Sciatic nerve (tissue), 2 donors: ENCODE measurements at regions of chr6 and their contacts with region 1.

Region 1: GRCh38 chr6:36701401-36701991 is 3.9 kb downstream of the RAB44 start:
- DNase-seq: no peak
- ATAC-seq: no peak

Region 2: GRCh38 chr6:36386495-36387439 is 314.7 kb before region 1 on chr6:
- intact Hi-C with region 1: no loop called
- DNase-seq: peak; percentile 68
- ATAC-seq: peak; percentile 68

Region 3: DNA sequence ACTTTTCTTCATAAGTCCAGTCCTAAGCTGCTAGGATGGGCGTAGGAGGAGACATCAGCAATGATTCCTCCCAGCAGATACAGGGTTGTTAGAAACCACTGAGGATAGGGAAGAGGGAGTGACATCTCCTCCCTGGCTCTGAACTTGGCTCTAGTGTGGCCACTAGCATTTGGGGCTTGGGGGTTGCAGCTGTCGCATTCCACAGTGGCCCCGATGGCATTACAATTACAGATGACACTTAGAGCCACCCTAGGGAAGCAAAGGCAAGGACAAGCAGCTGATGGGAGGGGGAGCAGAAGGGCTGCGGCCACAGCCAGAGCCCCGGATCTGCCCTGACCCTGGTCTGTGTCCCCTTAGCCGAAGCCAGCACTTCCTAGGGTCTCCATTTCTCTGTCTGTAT is 32.5 kb before region 1 on chr6:
- intact Hi-C with region 1: loop called (anchors 1 kb)
- DNase-seq: no peak
- ATAC-seq: no peak